Naive thymus-derived CD4-positive, alpha-beta T cell (primary cell): ENCODE measurements at regions of chr6 and their contacts with region 1.

Region 1: GRCh38 chr6:15274692-15275387 is 29.0 kb downstream of the JARID2 start:
- DNase-seq: no peak
- ATAC-seq: no peak
- H3K4me3 ChIP-seq: no peak overlapping the region
- H3K4me3 Mint-ChIP-seq: no peak overlapping the region
- H3K27ac ChIP-seq: no peak overlapping the region
- H3K27ac Mint-ChIP-seq: peak overlapping the region in 3 of 9 donors; percentile 17 to 22 (median 18)
- H3K4me1 ChIP-seq: peaks cover 0 to 7% of the 10 kb centered on the region in 2 donors
- H3K4me1 Mint-ChIP-seq: peaks cover 56 to 92% (median 72%) of the 10 kb centered on the region in 7 donors
- H3K27me3 ChIP-seq: no peaks in the 10 kb centered on the region
- H3K27me3 Mint-ChIP-seq: no peaks in the 10 kb centered on the region

Region 2: GRCh38 chr6:13725570-13725969 is 1549.3 kb before region 1 on chr6:
- CTCF ChIA-PET with region 1: no interaction called
- POLR2A ChIA-PET with region 1: no interaction called
- intact Hi-C with region 1: no loop called
- DNase-seq: peak in 1 of 9 donors; percentile 13
- ATAC-seq: peak; percentile 53
- H3K4me3 ChIP-seq: no peak overlapping the region
- H3K4me3 Mint-ChIP-seq: peak overlapping the region in 3 of 10 donors; percentile 24 to 66 (median 54)
- H3K27ac ChIP-seq: no peak overlapping the region
- H3K27ac Mint-ChIP-seq: peak overlapping the region in 3 of 9 donors; percentile 23 to 89 (median 85)
- H3K4me1 ChIP-seq: peaks cover 5 to 7% of the 10 kb centered on the region in 2 donors
- H3K4me1 Mint-ChIP-seq: peaks cover 12 to 27% (median 21%) of the 10 kb centered on the region in 7 donors
- H3K27me3 ChIP-seq: no peaks in the 10 kb centered on the region
- H3K27me3 Mint-ChIP-seq: peaks cover 0 to 2% (median 0%) of the 10 kb centered on the region in 5 donors

Region 3: GRCh38 chr6:15116889-15117288 is 158.0 kb before region 1 on chr6:
- CTCF ChIA-PET with region 1: no interaction called
- POLR2A ChIA-PET with region 1: no interaction called
- intact Hi-C with region 1: no loop called
- DNase-seq: no peak
- ATAC-seq: no peak
- H3K4me3 ChIP-seq: no peak overlapping the region
- H3K4me3 Mint-ChIP-seq: no peak overlapping the region
- H3K27ac ChIP-seq: no peak overlapping the region
- H3K27ac Mint-ChIP-seq: no peak overlapping the region
- H3K4me1 ChIP-seq: no peaks in the 10 kb centered on the region
- H3K4me1 Mint-ChIP-seq: peaks cover 0 to 9% (median 0%) of the 10 kb centered on the region in 7 donors
- H3K27me3 ChIP-seq: no peaks in the 10 kb centered on the region
- H3K27me3 Mint-ChIP-seq: no peaks in the 10 kb centered on the region

Region 4: GRCh38 chr6:15312500-15312899 is 37.7 kb after region 1 on chr6:
- CTCF ChIA-PET with region 1: no interaction called
- POLR2A ChIA-PET with region 1: no interaction called
- intact Hi-C with region 1: loop called in 1 of 2 experiments (anchors 5 kb)
- DNase-seq: peak in 3 of 9 donors; percentile 10 to 22 (median 20)
- ATAC-seq: peak; percentile 30
- H3K4me3 ChIP-seq: no peak overlapping the region
- H3K4me3 Mint-ChIP-seq: peak overlapping the region; percentile 3 to 61 (median 46)
- H3K27ac ChIP-seq: no peak overlapping the region
- H3K27ac Mint-ChIP-seq: peak overlapping the region; percentile 10 to 81 (median 47)
- H3K4me1 ChIP-seq: peaks cover 12 to 43% of the 10 kb centered on the region in 2 donors
- H3K4me1 Mint-ChIP-seq: peaks cover 66 to 98% (median 88%) of the 10 kb centered on the region in 7 donors
- H3K27me3 ChIP-seq: no peaks in the 10 kb centered on the region
- H3K27me3 Mint-ChIP-seq: no peaks in the 10 kb centered on the region

Region 5: DNA sequence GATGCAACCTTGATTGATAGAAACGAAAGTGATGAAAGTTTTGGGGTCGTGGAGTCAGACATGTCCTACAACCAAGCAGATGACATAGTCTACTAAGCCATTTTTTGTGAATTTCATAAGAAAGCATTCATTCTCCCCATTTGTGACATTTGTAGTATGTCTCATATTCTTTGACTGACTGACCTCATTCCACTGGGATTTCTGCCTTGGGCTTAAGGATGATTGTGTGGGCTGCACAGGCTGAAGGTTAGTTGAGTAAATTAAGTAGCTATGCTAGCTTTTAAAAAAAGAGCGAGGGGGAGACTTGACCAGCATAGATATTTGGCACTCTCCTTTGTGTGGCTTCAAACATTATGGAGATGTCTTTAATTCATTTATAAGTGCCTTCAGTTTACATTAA is 1855.9 kb after region 1 on chr6:
- CTCF ChIA-PET with region 1: no interaction called
- POLR2A ChIA-PET with region 1: no interaction called
- intact Hi-C with region 1: no loop called
- DNase-seq: no peak
- ATAC-seq: no peak
- H3K4me3 ChIP-seq: no peak overlapping the region
- H3K4me3 Mint-ChIP-seq: no peak overlapping the region
- H3K27ac ChIP-seq: no peak overlapping the region
- H3K27ac Mint-ChIP-seq: no peak overlapping the region
- H3K4me1 ChIP-seq: no peaks in the 10 kb centered on the region
- H3K4me1 Mint-ChIP-seq: peaks cover 0 to 1% (median 0%) of the 10 kb centered on the region in 7 donors
- H3K27me3 ChIP-seq: no peaks in the 10 kb centered on the region
- H3K27me3 Mint-ChIP-seq: peaks cover 2 to 41% (median 32%) of the 10 kb centered on the region in 5 donors